Common myeloid progenitor, CD34-positive (primary cell): ENCODE measurements at regions of chr1 and their contacts with region 1.

Region 1: DNA sequence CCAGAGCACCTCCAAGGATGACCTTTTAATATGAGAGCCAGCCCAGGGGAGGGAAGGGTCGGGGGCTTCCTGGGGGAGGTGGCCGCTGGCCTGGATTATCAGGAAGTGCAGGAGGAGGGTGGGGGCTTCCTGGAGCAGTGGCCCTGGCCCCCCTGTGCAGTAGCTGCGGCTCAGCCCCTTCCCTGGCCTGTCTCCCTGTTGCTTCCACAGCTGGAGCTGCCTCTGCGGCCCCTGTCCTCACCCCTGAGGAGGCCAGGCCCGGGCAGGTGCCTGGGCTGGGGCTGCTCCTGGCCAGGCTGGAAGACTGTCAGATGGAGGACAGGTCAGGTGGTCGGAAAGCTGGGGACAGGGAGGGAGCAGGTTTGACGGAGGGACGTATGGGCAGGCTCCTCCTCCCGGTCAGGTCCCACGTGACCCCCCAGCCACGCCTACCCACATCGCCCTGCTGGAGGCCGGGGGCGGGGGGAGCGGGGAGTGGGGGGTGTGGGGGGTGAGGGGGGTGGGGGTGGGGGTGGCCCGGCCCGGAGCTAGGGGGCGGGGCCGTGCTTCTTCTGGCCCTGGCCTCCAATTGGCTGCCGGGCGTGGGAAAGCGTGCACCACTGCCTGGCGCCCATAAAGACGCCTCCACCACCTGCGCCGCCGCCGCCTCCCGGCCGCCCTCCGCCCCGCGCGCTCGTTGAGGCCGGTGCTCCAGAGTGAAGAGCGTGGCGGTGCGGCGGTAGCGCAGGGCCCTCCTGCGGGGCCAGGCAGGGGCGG is 10.2 kb upstream of the TNFRSF14 start:
- DNase-seq: peak; percentile 86 to 90 (median 90)
- H3K4me3 ChIP-seq: peak overlapping the region in 6 of 7 experiments; percentile 36 to 82 (median 63)
- H3K27ac ChIP-seq: peak overlapping the region in 1 of 2 experiments; percentile 68
- H3K4me1 ChIP-seq: peaks cover 0 to 66% (median 63%) of the 10 kb centered on the region in 4 experiments
- H3K27me3 ChIP-seq: peaks cover 0 to 4% (median 0%) of the 10 kb centered on the region in 5 experiments

Region 2: DNA sequence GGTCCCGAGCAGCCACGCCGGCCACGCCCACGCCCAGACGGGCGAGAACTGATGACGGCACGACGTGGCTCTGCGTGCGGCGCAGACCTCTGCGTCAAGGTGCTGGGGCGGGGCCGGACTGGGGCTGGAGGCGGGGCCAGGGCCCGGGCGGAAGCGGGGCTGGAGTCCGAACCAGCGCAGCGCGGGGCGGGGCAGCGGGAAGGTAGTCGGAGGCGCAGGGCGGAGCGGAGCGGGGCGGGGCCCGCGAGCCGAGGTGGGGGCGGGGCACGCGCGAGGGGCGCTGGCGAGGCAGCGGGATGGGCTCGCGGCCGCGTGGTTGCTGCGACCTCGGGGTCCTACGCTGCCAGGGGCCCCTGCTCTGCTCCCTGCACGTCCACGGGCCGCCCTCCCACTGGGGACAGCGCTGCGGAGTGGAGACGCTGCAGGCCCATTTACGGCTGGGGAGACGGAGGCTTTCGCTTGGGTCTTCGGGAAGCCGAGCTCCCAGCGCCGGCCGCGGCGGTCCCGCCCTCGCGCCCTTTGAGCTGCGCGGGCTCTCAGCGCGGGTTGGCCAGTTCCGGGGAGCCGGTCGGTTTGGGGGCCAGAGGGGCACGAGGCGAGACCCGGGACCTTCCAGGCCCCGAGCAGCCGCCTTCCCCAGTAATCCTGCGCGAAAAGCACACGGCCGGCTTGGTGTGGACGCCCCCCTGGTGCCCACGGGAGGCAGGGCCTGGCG is 133.3 kb before region 1 on chr1 and contains the start of gene PEX10:
- CTCF ChIA-PET with region 1: interaction called, 28 read pairs
- POLR2A ChIA-PET with region 1: interaction called, 5 read pairs
- DNase-seq: peak; percentile 94 to 97 (median 97)
- H3K4me3 ChIP-seq: peak within 1 kb of the TSS; percentile 79 to 94 (median 90)
- H3K27ac ChIP-seq: peak within 1 kb of the TSS; percentile 64 to 83
- H3K4me1 ChIP-seq: peaks cover 0 to 51% (median 50%) of the 10 kb centered on the region in 4 experiments
- H3K27me3 ChIP-seq: peaks cover 0 to 4% (median 0%) of the 10 kb centered on the region in 5 experiments

Region 3: DNA sequence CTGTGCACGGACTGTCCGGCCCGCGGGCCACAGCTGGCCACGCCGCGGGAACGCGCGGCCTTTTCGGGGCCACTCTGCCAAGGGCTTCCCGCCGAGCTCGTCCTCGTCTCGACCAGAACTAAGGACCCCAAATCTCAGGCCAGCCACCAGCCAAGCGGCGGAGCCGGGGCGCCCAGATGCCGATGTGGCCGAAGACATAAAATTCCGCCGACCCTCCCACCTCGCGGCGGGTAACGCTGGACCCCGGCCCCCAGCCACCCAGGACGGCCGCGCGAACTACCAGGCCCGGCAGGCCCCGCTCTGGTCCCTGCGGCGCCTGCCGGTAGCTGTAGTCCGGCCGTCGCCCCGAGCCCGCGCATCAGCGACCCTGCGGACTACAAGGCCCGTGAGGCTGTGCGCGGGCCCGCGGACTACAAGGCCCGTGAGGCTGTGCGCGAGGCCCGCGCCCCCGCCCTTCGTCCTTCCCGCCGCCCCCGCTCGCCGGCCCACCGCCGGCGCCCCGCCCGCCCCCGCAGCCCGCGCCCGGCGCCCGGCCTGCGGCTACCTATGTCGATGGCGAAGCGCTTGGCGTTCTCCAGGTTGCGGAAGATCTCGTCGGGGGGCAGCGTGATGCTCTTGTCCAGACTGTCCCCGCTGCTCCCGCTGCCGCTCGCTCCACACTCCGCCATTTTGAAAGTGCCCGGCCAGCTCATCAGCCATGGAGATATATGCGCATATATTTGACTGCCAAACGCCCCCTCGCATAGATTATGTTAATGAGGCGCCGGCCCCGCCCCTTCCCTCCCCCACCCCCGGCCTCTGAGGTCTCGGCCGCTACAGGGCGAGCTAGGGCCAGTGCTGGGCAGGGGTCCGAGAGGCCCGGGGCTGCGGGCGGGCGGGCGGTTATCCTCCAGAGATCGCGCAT is 19.8 kb before region 1 on chr1 and contains the start of gene PANK4:
- CTCF ChIA-PET with region 1: interaction called, 52 read pairs
- POLR2A ChIA-PET with region 1: interaction called, 11 read pairs
- DNase-seq: peak; percentile 92 to 95 (median 95)
- H3K4me3 ChIP-seq: peak within 1 kb of the TSS; percentile 63 to 95 (median 81)
- H3K27ac ChIP-seq: peak within 1 kb of the TSS; percentile 74 to 82
- H3K4me1 ChIP-seq: peaks cover 6 to 57% (median 48%) of the 10 kb centered on the region in 4 experiments
- H3K27me3 ChIP-seq: peaks cover 0 to 41% (median 10%) of the 10 kb centered on the region in 5 experiments

Region 4: GRCh38 chr1:2586154-2587070 is 40.5 kb after region 1 on chr1 and contains the start of gene PRXL2B:
- CTCF ChIA-PET with region 1: interaction called, 19 read pairs
- POLR2A ChIA-PET with region 1: interaction called, 5 read pairs
- DNase-seq: peak; percentile 97 to 98 (median 98)
- H3K4me3 ChIP-seq: peak within 1 kb of the TSS; percentile 52 to 86 (median 74)
- H3K27ac ChIP-seq: peak within 1 kb of the TSS; percentile 83 to 93
- H3K4me1 ChIP-seq: peaks cover 4 to 44% (median 37%) of the 10 kb centered on the region in 4 experiments
- H3K27me3 ChIP-seq: no peaks in the 10 kb centered on the region